CD8-positive, alpha-beta T cell (primary cell): ENCODE measurements at regions of chr9 and their contacts with region 1.

Region 1: DNA sequence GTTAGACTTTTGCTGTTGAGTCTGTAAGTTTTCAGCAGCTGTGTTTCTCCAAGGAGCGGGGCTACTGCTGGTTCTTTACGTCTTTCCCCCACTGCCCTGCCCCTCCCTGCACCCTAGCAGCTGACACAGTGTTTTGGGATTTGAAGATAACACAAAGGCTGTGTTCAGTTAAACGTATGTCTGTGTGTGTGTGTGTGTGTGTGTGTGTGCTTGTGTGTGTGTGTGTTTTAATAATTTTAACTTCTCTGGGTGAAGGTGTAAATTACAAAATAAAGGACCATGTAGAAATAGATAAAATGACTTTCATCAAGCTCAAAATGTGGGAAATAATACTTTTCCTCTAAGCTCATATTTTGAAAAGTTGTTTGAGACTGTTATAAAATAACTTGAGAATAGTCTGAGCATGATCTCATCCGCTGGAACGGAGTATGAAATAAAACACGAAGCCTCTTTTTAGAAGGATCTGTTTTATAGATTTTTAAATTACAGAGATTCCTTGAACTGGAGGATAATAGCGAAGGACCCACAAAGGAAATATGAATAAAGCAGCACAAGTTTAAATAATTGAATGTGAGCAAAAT is 10.9 kb downstream of the ABL1 start:
- DNase-seq: no peak
- ATAC-seq: no peak
- H3K4me3 ChIP-seq: no peak overlapping the region
- H3K4me3 Mint-ChIP-seq: no peak overlapping the region
- H3K27ac ChIP-seq: no peak overlapping the region
- H3K27ac Mint-ChIP-seq: no peak overlapping the region
- H3K4me1 ChIP-seq: no peaks in the 10 kb centered on the region
- H3K4me1 Mint-ChIP-seq: peaks cover 30% of the 10 kb centered on the region
- H3K27me3 ChIP-seq: no peaks in the 10 kb centered on the region
- H3K27me3 Mint-ChIP-seq: no peaks in the 10 kb centered on the region
- CTCF ChIP-seq: no peak

Region 2: DNA sequence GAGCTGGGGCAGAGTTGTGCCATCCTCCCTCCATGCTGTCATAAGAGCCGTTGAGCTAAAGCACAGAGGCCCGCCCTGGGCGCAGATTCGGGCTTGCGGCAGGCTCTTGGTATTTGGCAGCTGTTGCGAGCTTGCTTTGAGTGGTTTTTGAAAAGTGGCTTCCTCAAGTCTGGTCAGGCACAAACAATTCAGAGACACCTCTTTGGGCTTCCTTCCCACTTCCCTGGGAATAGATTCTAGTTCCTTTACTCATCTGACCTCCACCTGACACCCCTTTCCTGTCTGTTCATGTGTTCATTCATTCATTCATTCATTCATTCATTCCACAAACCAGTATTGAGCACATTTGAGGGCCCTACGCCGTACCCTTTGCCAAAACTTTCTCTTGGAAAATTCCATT is 646.4 kb before region 1 on chr9:
- CTCF ChIA-PET with region 1: no interaction called
- POLR2A ChIA-PET with region 1: no interaction called
- intact Hi-C with region 1: no loop called
- DNase-seq: no peak
- ATAC-seq: no peak
- H3K4me3 ChIP-seq: no peak overlapping the region
- H3K4me3 Mint-ChIP-seq: no peak overlapping the region
- H3K27ac ChIP-seq: no peak overlapping the region
- H3K27ac Mint-ChIP-seq: no peak overlapping the region
- H3K4me1 ChIP-seq: no peaks in the 10 kb centered on the region
- H3K4me1 Mint-ChIP-seq: no peaks in the 10 kb centered on the region
- H3K27me3 ChIP-seq: no peaks in the 10 kb centered on the region
- H3K27me3 Mint-ChIP-seq: no peaks in the 10 kb centered on the region
- CTCF ChIP-seq: no peak

Region 3: GRCh38 chr9:130794923-130795495 is 51.0 kb before region 1 on chr9:
- CTCF ChIA-PET with region 1: no interaction called
- POLR2A ChIA-PET with region 1: no interaction called
- intact Hi-C with region 1: loop called in 1 of 2 experiments (anchors 1 kb)
- DNase-seq: no peak
- ATAC-seq: no peak
- H3K4me3 ChIP-seq: no peak overlapping the region
- H3K4me3 Mint-ChIP-seq: no peak overlapping the region
- H3K27ac ChIP-seq: no peak overlapping the region
- H3K27ac Mint-ChIP-seq: no peak overlapping the region
- H3K4me1 ChIP-seq: no peaks in the 10 kb centered on the region
- H3K4me1 Mint-ChIP-seq: peaks cover 2% of the 10 kb centered on the region
- H3K27me3 ChIP-seq: no peaks in the 10 kb centered on the region
- H3K27me3 Mint-ChIP-seq: no peaks in the 10 kb centered on the region
- CTCF ChIP-seq: no peak